ENCODE measurements at regions of chrX and their contacts with region 1.

Region 1: DNA sequence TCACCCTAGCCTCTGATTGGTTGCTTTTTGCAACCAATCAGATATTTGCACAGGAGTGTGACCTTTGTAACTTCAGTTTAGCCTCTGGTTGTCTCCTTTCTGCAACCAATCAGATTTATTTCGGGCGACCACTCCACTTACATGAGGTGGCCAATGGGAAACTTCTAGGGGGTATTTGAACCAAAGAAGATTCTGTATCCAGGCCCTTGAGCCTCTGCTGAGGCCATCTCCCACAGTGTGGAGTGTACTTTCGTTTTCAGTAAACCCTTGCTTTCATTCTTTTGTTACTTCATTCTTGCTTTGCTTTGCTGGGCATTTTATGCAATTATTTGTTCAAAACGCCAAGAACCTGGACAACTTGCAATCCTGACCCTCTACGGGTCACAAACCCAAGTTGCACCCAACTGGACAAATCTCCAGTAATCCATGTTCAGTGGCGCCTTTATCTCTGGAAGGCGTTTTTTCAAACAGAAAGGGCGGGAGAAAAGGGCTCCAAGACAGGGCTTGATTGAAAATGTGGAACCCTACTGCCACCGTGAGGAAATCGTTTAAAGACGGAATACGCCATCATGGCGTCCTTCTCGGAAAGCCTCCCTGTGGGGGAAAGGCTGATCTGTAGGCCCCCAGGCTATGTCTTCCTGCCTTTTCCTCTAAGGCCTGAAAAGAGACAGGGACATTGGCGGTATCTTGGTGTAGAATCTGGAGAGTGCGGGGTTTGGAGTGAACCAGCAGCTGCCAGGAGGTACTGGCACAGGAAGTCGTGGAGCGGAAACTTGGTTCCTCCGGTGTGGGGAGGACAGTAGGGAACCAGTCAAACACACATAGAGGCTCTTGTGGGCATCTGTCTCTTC is 184.6 kb downstream of the OR13H1 start:
- DNase-seq: peak; percentile 84
- ATAC-seq: peak; percentile 91
- H3K4me3 ChIP-seq: peak overlapping the region; percentile 41; the same call in 1 of the 2 replicates
- H3K27ac ChIP-seq: peak overlapping the region; percentile 78
- H3K4me1 ChIP-seq: no peaks in the 10 kb centered on the region
- H3K27me3 ChIP-seq: no peaks in the 10 kb centered on the region
- CTCF ChIP-seq: peak; percentile 36 to 66 (median 46); a peak in 5 of 6 replicates
- EP300 ChIP-seq: no peak
- POLR2A ChIP-seq: no peak
- RAD21 ChIP-seq: peak; percentile 73

Region 2: GRCh38 chrX:131544218-131544617 is 184.3 kb before region 1 on chrX:
- CTCF ChIA-PET with region 1: no interaction called
- POLR2A ChIA-PET with region 1: no interaction called
- RAD21 ChIA-PET with region 1: no interaction called
- SMC1A ChIA-PET with region 1: no interaction called
- in situ Hi-C with region 1: no loop called
- intact Hi-C with region 1: no loop called
- DNase-seq: no peak
- ATAC-seq: no peak
- H3K4me3 ChIP-seq: no peak overlapping the region
- H3K27ac ChIP-seq: no peak overlapping the region
- H3K4me1 ChIP-seq: no peaks in the 10 kb centered on the region
- H3K27me3 ChIP-seq: no peaks in the 10 kb centered on the region
- CTCF ChIP-seq: no peak
- EP300 ChIP-seq: no peak
- POLR2A ChIP-seq: no peak
- RAD21 ChIP-seq: no peak

Region 3: GRCh38 chrX:131704136-131704695 is 24.3 kb before region 1 on chrX:
- CTCF ChIA-PET with region 1: interaction called, 4 read pairs
- POLR2A ChIA-PET with region 1: no interaction called
- RAD21 ChIA-PET with region 1: no interaction called
- SMC1A ChIA-PET with region 1: no interaction called
- in situ Hi-C with region 1: no loop called
- intact Hi-C with region 1: loop called (anchors 1 kb)
- DNase-seq: peak; percentile 87
- ATAC-seq: peak; percentile 85
- H3K4me3 ChIP-seq: peak overlapping the region; percentile 61
- H3K27ac ChIP-seq: peak overlapping the region; percentile 74
- H3K4me1 ChIP-seq: no peaks in the 10 kb centered on the region
- H3K27me3 ChIP-seq: no peaks in the 10 kb centered on the region
- CTCF ChIP-seq: peak; percentile 38 to 67 (median 53); a peak in 5 of 6 replicates
- EP300 ChIP-seq: no peak; a peak in 1 of 4 replicates
- POLR2A ChIP-seq: no peak
- RAD21 ChIP-seq: peak; percentile 69

Region 4: GRCh38 chrX:131741103-131741581 is 12.6 kb after region 1 on chrX:
- CTCF ChIA-PET with region 1: interaction called, 7 read pairs
- POLR2A ChIA-PET with region 1: no interaction called
- RAD21 ChIA-PET with region 1: interaction called, 5 read pairs
- SMC1A ChIA-PET with region 1: no interaction called
- in situ Hi-C with region 1: no loop called
- intact Hi-C with region 1: loop called (anchors 1 kb)
- DNase-seq: peak; percentile 87
- ATAC-seq: peak; percentile 83
- H3K4me3 ChIP-seq: peak overlapping the region; percentile 63
- H3K27ac ChIP-seq: peak overlapping the region; percentile 95
- H3K4me1 ChIP-seq: no peaks in the 10 kb centered on the region
- H3K27me3 ChIP-seq: no peaks in the 10 kb centered on the region
- CTCF ChIP-seq: peak; percentile 22 to 54 (median 43); a peak in 5 of 6 replicates
- EP300 ChIP-seq: no peak
- POLR2A ChIP-seq: 0 out of 2 replicates have a peak, but pooled peaks have one; percentile 28
- RAD21 ChIP-seq: peak; percentile 64

Region 5: DNA sequence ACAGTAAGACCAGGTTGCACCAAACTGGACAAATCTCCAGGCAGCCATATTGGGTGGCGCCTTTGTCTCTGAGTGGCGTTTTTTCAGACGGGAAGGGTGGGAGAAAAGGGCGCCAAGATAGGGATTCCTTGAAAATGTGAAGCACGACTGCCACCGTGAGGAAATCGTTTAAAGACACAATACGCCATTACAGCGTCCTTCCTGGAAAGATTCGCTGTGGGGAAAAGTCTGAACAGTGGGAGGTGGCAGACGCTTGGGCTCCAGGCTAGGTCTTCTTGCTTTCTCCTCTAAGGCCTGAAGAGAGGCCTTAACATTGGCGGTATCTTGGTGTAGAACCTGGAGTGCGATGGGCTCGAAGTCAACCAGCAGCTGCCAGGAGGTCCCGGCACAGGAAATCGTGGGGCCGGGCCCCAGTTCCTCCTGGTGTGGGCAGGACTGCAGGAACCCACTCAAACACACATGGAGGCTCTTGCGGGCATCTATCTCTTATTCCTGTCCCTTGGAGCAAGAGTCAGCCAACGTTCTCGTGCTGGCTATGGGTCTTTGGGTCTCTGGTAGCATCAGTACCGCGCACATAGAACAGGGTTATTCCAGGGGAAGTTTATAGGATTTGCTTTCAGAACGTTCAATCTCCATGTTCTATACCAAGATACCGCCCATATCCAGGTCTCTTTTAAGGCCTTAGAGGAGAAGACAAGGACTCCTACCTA is 24.1 kb after region 1 on chrX:
- CTCF ChIA-PET with region 1: interaction called, 3 read pairs
- POLR2A ChIA-PET with region 1: no interaction called
- RAD21 ChIA-PET with region 1: interaction called, 5 read pairs
- SMC1A ChIA-PET with region 1: interaction called, 3 read pairs
- in situ Hi-C with region 1: no loop called
- intact Hi-C with region 1: loop called (anchors 1 kb)
- DNase-seq: peak; percentile 87
- ATAC-seq: peak; percentile 82
- H3K4me3 ChIP-seq: peak overlapping the region; percentile 38; the same call in 1 of the 2 replicates
- H3K27ac ChIP-seq: peak overlapping the region; percentile 94
- H3K4me1 ChIP-seq: no peaks in the 10 kb centered on the region
- H3K27me3 ChIP-seq: no peaks in the 10 kb centered on the region
- CTCF ChIP-seq: peak; percentile 26 to 54 (median 36); a peak in 4 of 6 replicates
- EP300 ChIP-seq: no peak
- POLR2A ChIP-seq: no peak
- RAD21 ChIP-seq: peak; percentile 70

Region 6: DNA sequence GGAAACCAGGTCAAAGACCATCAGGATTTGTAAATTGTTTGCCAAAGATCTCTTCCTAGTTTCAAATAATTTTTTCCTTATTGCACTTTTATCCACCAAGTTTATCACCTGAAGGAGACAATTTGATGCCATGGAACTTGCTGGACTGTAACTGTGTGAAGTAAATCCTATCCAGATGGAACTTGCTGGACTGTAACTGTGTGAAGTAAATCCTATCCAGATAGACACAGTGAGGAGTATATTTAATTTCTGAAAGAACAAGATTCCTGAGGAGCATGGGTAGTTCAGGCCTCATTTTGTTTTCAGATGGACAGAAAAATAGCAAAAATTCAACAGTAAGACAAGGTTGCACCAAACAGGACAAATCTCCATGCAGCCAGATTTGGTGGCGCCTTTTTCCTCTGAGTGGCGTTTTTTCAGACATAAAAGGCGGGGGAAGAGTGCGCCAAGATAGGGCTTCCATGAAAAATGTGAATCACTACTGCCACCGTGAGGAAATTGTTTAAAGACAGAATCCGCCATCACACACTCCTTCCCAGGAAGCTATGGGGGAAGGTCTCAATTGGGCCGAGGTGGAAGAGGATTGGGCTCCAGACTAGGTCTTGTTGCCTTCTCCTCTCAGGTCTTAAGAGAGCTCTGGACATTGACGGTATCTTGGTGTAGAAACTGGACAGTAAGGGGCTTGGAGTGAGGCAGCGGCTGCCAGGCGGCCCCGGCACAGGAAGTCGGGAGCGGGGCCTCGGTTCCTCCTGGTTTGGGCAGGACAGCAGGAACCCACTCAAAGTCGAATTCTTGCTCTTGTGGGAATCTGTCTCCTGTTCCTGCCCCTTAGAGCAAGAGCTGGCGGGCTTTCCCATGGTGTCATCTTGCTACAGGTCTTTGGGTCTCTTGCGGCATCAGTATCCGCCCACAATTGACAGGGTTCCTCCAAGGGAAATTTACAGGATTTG is 50.0 kb after region 1 on chrX:
- CTCF ChIA-PET with region 1: no interaction called
- POLR2A ChIA-PET with region 1: no interaction called
- RAD21 ChIA-PET with region 1: no interaction called
- SMC1A ChIA-PET with region 1: no interaction called
- in situ Hi-C with region 1: no loop called
- intact Hi-C with region 1: loop called (anchors 1 kb)
- DNase-seq: peak; percentile 82
- ATAC-seq: peak; percentile 89
- H3K4me3 ChIP-seq: peak overlapping the region; percentile 55; the same call in 1 of the 2 replicates
- H3K27ac ChIP-seq: peak overlapping the region; percentile 90
- H3K4me1 ChIP-seq: peaks cover 5% of the 10 kb centered on the region; the same call in 1 of the 2 replicates
- H3K27me3 ChIP-seq: no peaks in the 10 kb centered on the region; a peak in 1 of 4 replicates
- CTCF ChIP-seq: peak in 2 of 3 experiments; percentile 42 to 61; a peak in 3 of 6 replicates
- EP300 ChIP-seq: no peak
- POLR2A ChIP-seq: no peak
- RAD21 ChIP-seq: peak; percentile 71

Region 7: DNA sequence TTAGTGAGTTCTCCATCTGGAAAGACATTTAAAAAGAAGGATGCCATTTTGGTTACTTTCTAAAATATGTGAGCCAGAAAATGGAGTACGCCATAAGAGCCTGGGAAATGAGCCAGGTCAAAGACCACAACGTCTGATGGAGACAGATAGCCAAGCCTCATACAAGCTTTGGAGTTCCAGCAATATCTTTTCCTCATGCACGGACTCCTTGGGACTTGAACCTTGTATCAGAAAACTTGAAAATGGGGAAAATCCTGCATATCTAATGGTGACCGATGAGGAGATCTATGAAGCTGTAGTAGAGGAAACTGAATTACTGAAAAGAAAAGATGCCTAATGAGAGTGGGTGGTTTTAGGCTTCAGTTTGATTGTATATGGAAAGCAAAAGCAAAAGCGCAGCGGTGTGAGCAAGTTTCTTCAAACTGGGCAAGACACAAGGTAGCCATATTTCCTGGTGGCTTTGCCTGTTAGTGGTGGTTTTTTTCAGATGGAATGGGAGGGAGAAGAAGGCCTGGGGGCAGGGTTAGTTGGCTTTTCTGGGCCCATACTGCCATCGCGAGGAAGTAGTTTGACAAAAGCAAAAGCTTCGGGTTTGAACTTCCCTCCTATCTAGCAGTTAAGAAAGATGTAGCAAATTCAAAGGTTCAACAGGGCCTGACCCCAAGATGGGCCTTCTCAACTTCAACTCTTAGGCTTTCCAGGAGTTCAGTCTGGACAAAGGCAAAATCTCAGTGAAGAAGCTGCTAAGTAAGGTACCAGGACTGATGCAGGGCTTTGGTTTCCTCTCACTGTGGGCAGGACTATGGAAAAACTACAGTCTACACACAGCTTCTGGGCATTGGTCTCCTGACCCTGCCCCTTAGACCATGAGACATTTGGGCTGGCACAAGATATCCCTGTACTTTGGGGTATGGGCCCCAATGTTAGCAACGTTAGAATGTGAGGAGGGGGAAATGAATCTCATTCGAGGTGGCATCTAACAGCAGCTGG is 84.6 kb after region 1 on chrX:
- CTCF ChIA-PET with region 1: interaction called, 3 read pairs
- POLR2A ChIA-PET with region 1: no interaction called
- RAD21 ChIA-PET with region 1: no interaction called
- SMC1A ChIA-PET with region 1: no interaction called
- in situ Hi-C with region 1: no loop called
- intact Hi-C with region 1: loop called (anchors 1 kb)
- DNase-seq: peak; percentile 92
- ATAC-seq: peak; percentile 95
- H3K4me3 ChIP-seq: peak overlapping the region; percentile 58
- H3K27ac ChIP-seq: peak overlapping the region; percentile 84
- H3K4me1 ChIP-seq: peaks cover 13% of the 10 kb centered on the region; the same call in 1 of the 2 replicates
- H3K27me3 ChIP-seq: no peaks in the 10 kb centered on the region
- CTCF ChIP-seq: peak; percentile 45 to 86 (median 64); a peak in 5 of 6 replicates
- EP300 ChIP-seq: peak in 1 of 2 experiments; percentile 53; a peak in 2 of 4 replicates
- POLR2A ChIP-seq: no peak
- RAD21 ChIP-seq: peak; percentile 89